ENCODE measurements at regions of chr12 and their contacts with region 1.

Region 1: GRCh38 chr12:101697197-101697929 is at the start of gene CHPT1:
- DNase-seq: peak; percentile 45 to 73 (median 59)
- H3K4me3 ChIP-seq: peak within 1 kb of the TSS; percentile 68 to 76
- H3K4me3 Mint-ChIP-seq: peak within 1 kb of the TSS; percentile 91 to 96 (median 94)
- H3K27ac ChIP-seq: peak within 1 kb of the TSS; percentile 53
- H3K27ac Mint-ChIP-seq: peak within 1 kb of the TSS; percentile 73 to 93 (median 87)
- H3K4me1 ChIP-seq: peaks cover 22% of the 10 kb centered on the region
- H3K4me1 Mint-ChIP-seq: peaks cover 28 to 54% (median 37%) of the 10 kb centered on the region in 4 donors
- H3K27me3 ChIP-seq: no peaks in the 10 kb centered on the region
- H3K27me3 Mint-ChIP-seq: no peaks in the 10 kb centered on the region
- total RNA-seq, gene CHPT1: 17.7 to 19.1 TPM

Region 2: DNA sequence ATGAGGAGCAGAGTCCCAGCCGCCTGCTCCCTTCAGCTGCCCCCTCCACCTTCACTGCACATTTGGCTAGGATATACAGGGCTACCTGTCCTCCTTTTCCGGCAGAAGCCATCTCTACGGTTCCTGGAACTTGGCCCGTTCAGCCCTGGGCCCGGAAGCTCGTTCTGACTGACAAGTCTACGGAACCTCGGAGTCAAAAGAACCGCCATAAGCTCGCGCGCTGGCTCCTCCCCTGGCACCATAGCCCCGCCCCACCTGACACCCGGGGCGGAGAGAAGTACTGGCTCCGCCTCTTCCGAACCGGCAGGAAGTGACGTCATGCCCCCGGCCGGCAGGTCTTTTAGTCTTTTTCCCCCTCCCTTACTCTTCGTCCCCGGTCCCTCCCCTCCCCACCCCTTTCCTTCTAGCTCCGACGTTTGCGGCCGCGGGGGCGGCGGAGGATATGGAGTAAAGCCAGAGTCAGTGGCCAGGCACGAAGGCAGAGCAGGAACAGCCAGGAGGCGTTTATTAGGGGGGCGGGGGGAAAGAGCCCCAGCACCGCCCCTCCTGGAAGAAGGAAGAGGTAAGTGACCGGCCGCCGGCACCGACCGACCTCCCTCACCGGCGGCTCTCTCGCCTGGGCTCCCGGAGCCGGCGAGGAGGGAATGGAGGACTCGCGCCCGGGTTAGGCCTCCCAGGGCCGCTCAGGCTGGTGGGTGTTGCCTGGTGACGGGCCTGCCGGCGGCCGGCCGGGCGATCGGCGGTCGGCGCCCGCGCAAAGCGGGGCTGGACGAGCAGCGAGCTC is 1430.3 kb before region 1 on chr12 and contains the starts of genes DEPDC4 and SCYL2:
- CTCF ChIA-PET with region 1: no interaction called
- POLR2A ChIA-PET with region 1: no interaction called
- intact Hi-C with region 1: loop called (anchors 10 kb)
- DNase-seq: peak; percentile 93 to 98 (median 96)
- H3K4me3 ChIP-seq: peak within 1 kb of the TSS; percentile 26 to 90
- H3K4me3 Mint-ChIP-seq: peak within 1 kb of the TSS; percentile 97 to 100 (median 99)
- H3K27ac ChIP-seq: peak within 1 kb of the TSS; percentile 95
- H3K27ac Mint-ChIP-seq: peak within 1 kb of the TSS; percentile 95 to 100 (median 99)
- H3K4me1 ChIP-seq: peaks cover 46% of the 10 kb centered on the region
- H3K4me1 Mint-ChIP-seq: peaks cover 19 to 44% (median 32%) of the 10 kb centered on the region in 4 donors
- H3K27me3 ChIP-seq: no peaks in the 10 kb centered on the region
- H3K27me3 Mint-ChIP-seq: no peaks in the 10 kb centered on the region
- total RNA-seq, gene DEPDC4: 0.38 to 1.4 TPM
- total RNA-seq, gene SCYL2: 47.8 to 52.5 TPM

Region 3: DNA sequence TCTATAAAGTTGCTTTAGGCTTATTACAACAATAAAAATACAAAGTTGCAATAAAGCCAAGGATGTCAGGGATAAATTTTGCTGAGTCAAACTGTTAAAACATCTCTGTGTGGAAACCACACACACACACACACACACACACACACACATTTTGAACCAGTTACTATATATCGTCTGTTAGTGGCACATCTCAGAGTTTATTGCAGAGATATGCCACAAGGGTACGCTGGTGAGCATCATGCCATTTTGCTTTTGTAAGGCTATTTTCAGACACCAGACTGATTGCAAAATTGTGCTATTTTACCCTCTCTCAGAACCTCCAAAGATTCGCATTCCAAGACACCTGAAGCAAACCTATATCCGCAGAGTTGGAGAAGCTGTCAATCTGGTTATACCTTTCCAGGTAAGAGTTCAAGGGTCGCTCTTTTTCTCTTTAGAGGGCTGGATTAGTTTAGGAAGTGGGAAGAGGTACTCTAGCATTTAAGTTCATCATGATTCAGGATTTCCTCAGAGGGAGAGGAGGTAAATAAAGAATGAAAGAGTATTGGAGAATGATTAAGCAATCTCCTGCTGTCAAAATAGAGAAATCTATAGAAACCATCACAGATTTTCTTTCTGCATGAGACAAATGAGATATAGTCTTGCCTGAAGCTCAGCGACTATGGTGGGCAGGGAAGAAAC is 27.2 kb before region 1 on chr12:
- CTCF ChIA-PET with region 1: no interaction called
- POLR2A ChIA-PET with region 1: no interaction called
- intact Hi-C with region 1: loop called (anchors 1 kb)
- DNase-seq: peak; percentile 37 to 67 (median 47)
- H3K4me3 ChIP-seq: no peak overlapping the region
- H3K4me3 Mint-ChIP-seq: peak overlapping the region in 1 of 8 donors; percentile 80
- H3K27ac ChIP-seq: no peak overlapping the region
- H3K27ac Mint-ChIP-seq: peak overlapping the region in 3 of 7 donors; percentile 4 to 66 (median 24)
- H3K4me1 ChIP-seq: peaks cover 21% of the 10 kb centered on the region
- H3K4me1 Mint-ChIP-seq: peaks cover 14 to 28% (median 21%) of the 10 kb centered on the region in 4 donors
- H3K27me3 ChIP-seq: no peaks in the 10 kb centered on the region
- H3K27me3 Mint-ChIP-seq: peaks cover 0 to 7% of the 10 kb centered on the region in 2 donors

Region 4: GRCh38 chr12:101876861-101877815 is 179.8 kb after region 1 on chr12 and contains the start of gene DRAM1:
- CTCF ChIA-PET with region 1: no interaction called
- POLR2A ChIA-PET with region 1: no interaction called
- intact Hi-C with region 1: loop called (anchors 5 kb)
- DNase-seq: peak; percentile 66 to 74 (median 69)
- H3K4me3 ChIP-seq: peak within 1 kb of the TSS; percentile 58 to 60
- H3K4me3 Mint-ChIP-seq: peak within 1 kb of the TSS; percentile 83 to 95 (median 90)
- H3K27ac ChIP-seq: peak within 1 kb of the TSS; percentile 78
- H3K27ac Mint-ChIP-seq: peak within 1 kb of the TSS; percentile 79 to 93 (median 89)
- H3K4me1 ChIP-seq: peaks cover 14% of the 10 kb centered on the region
- H3K4me1 Mint-ChIP-seq: peaks cover 7 to 13% (median 13%) of the 10 kb centered on the region in 4 donors
- H3K27me3 ChIP-seq: no peaks in the 10 kb centered on the region
- H3K27me3 Mint-ChIP-seq: no peaks in the 10 kb centered on the region
- total RNA-seq, gene DRAM1: 2.3 to 2.7 TPM

Region 5: GRCh38 chr12:102061560-102062418 is 364.4 kb after region 1 on chr12 and contains the start of gene WASHC3:
- CTCF ChIA-PET with region 1: no interaction called
- POLR2A ChIA-PET with region 1: no interaction called
- intact Hi-C with region 1: loop called (anchors 5 kb)
- DNase-seq: peak; percentile 94 to 97 (median 94)
- H3K4me3 ChIP-seq: peak within 1 kb of the TSS; percentile 59 to 78
- H3K4me3 Mint-ChIP-seq: peak within 1 kb of the TSS; percentile 94 to 100 (median 98)
- H3K27ac ChIP-seq: peak within 1 kb of the TSS; percentile 97
- H3K27ac Mint-ChIP-seq: peak within 1 kb of the TSS; percentile 98 to 99 (median 99)
- H3K4me1 ChIP-seq: peaks cover 31% of the 10 kb centered on the region
- H3K4me1 Mint-ChIP-seq: peaks cover 27 to 46% (median 36%) of the 10 kb centered on the region in 4 donors
- H3K27me3 ChIP-seq: no peaks in the 10 kb centered on the region
- H3K27me3 Mint-ChIP-seq: peaks cover 2 to 3% of the 10 kb centered on the region in 2 donors
- total RNA-seq, gene WASHC3: 44.6 to 46.5 TPM

Region 6: DNA sequence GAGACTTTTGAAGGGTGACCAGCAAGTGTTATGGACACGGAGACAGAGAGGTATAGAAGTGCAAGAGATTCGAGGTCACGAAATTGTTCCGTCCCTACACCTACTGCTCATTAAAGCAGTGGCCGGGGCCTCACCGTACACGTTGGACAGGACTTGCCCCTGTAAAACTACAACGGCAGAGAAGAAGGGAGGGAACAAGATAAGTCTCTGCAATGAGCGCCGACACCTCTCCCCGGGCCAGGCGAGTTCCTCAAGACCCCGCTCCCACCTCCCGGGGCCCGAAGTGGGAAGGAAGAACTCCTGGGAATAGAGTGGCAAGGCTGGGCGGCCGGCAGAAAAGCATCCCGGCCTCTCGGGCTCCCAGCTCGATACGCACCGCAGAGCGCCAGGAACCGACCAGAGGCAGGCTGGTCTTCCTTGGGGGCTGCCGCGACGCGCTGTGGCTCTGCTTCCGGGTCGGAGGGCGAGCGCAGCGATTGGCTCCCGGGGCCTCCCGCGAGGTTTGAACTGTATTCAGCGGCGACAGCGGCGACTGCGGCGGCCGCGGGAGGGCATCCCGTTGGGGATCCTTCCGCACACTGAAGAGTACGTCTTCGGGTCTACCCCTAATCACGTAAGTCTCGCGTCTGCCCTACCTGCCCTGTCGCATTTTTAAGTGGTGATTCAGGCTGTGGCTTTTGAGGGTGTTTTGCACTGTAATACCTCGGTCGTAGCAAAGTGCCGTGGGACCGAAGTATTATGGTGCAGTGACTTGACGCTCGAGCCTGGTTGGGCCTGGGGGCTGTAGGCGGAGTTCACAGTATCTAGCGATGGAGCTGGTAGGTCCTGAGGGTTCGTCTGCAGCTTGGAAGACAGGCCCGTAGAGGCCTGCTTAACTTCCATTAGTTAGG is 422.6 kb after region 1 on chr12 and contains the starts of genes NUP37 and PARPBP:
- CTCF ChIA-PET with region 1: no interaction called
- POLR2A ChIA-PET with region 1: no interaction called
- intact Hi-C with region 1: loop called (anchors 10 kb)
- DNase-seq: peak; percentile 92 to 93 (median 92)
- H3K4me3 ChIP-seq: peak within 1 kb of the TSS; percentile 86 to 95
- H3K4me3 Mint-ChIP-seq: peak within 1 kb of the TSS; percentile 86 to 96 (median 92)
- H3K27ac ChIP-seq: peak within 1 kb of the TSS; percentile 93
- H3K27ac Mint-ChIP-seq: peak within 1 kb of the TSS; percentile 88 to 96 (median 94)
- H3K4me1 ChIP-seq: peaks cover 24% of the 10 kb centered on the region
- H3K4me1 Mint-ChIP-seq: peaks cover 13 to 35% (median 19%) of the 10 kb centered on the region in 4 donors
- H3K27me3 ChIP-seq: no peaks in the 10 kb centered on the region
- H3K27me3 Mint-ChIP-seq: no peaks in the 10 kb centered on the region
- total RNA-seq, gene NUP37: 17.0 to 18.8 TPM
- total RNA-seq, gene PARPBP: 2.3 to 2.6 TPM

Measured in CD4-positive, alpha-beta memory T cell (primary cell).